CD8-positive, alpha-beta T cell (primary cell): ENCODE measurements at regions of chr14 and their contacts with region 1.

Region 1: GRCh38 chr14:89954070-89955028 is at the start of gene EFCAB11:
- DNase-seq: peak; percentile 89 to 99 (median 93)
- ATAC-seq: peak; percentile 80
- H3K4me3 ChIP-seq: peak within 1 kb of the TSS; percentile 68 to 69
- H3K4me3 Mint-ChIP-seq: peak within 1 kb of the TSS; percentile 92
- H3K27ac ChIP-seq: peak within 1 kb of the TSS; percentile 99
- H3K27ac Mint-ChIP-seq: peak within 1 kb of the TSS; percentile 88
- H3K4me1 ChIP-seq: peaks cover 34% of the 10 kb centered on the region
- H3K4me1 Mint-ChIP-seq: peaks cover 40% of the 10 kb centered on the region
- H3K27me3 ChIP-seq: no peaks in the 10 kb centered on the region
- H3K27me3 Mint-ChIP-seq: no peaks in the 10 kb centered on the region
- CTCF ChIP-seq: no peak
- total RNA-seq, gene EFCAB11: 0.76 to 1.1 TPM

Region 2: GRCh38 chr14:88562831-88563686 is 1391.3 kb before region 1 on chr14 and contains the start of gene ZC3H14:
- CTCF ChIA-PET with region 1: no interaction called
- POLR2A ChIA-PET with region 1: no interaction called
- intact Hi-C with region 1: loop called (anchors 2 to 10 kb)
- DNase-seq: peak; percentile 69 to 94 (median 86)
- ATAC-seq: peak; percentile 95
- H3K4me3 ChIP-seq: peak within 1 kb of the TSS; percentile 75 to 91
- H3K4me3 Mint-ChIP-seq: peak within 1 kb of the TSS; percentile 96
- H3K27ac ChIP-seq: peak within 1 kb of the TSS; percentile 52 to 66
- H3K27ac Mint-ChIP-seq: peak within 1 kb of the TSS; percentile 91
- H3K4me1 ChIP-seq: peaks cover 20% of the 10 kb centered on the region
- H3K4me1 Mint-ChIP-seq: peaks cover 35% of the 10 kb centered on the region
- H3K27me3 ChIP-seq: no peaks in the 10 kb centered on the region
- H3K27me3 Mint-ChIP-seq: peaks cover 7% of the 10 kb centered on the region
- CTCF ChIP-seq: no peak
- total RNA-seq, gene ZC3H14: 36.3 to 39.3 TPM

Region 3: GRCh38 chr14:89598548-89599186 is 355.7 kb before region 1 on chr14:
- CTCF ChIA-PET with region 1: no interaction called
- POLR2A ChIA-PET with region 1: no interaction called
- intact Hi-C with region 1: no loop called
- DNase-seq: peak in 1 of 9 experiments; percentile 34
- ATAC-seq: peak; percentile 57
- H3K4me3 ChIP-seq: no peak overlapping the region
- H3K4me3 Mint-ChIP-seq: no peak overlapping the region
- H3K27ac ChIP-seq: no peak overlapping the region
- H3K27ac Mint-ChIP-seq: no peak overlapping the region
- H3K4me1 ChIP-seq: peaks cover 23% of the 10 kb centered on the region
- H3K4me1 Mint-ChIP-seq: peaks cover 39% of the 10 kb centered on the region
- H3K27me3 ChIP-seq: no peaks in the 10 kb centered on the region
- H3K27me3 Mint-ChIP-seq: no peaks in the 10 kb centered on the region
- CTCF ChIP-seq: no peak

Region 4: DNA sequence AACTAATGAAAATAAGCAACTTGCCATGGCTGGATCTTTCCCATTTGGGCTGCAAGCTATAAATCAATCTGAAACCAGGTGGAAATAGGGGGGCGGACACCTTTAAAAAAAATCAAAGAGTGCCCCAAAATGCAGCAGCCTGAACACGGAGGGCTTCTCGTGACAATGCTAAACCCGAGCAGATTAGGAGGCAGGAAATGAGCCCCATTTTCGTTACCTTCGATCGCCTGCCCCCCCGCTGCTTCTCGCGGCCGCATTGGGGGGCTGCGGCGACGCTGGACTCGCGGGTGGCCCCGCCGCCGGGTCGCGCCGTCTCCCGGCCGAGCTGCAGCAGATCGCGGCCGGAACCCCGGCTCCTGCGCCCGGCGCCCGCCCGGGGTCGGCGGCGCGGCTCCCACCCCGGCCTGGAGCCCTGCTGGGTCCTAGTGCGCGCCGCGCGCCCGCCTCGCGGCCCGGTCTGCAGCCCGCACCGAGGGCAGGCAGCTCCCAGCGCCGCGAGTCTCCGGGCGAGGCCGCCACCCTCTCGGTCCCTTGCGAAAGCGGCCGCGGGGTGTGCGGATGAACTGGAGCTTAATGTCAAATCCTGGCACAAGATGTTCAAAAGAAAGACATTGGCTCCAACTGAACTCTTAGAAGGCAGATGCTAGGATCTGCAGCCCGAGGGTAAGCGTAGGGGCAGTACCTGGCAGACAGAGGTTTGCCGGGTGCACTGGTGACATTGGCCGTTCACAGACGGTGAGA is 335.4 kb before region 1 on chr14:
- CTCF ChIA-PET with region 1: no interaction called
- POLR2A ChIA-PET with region 1: no interaction called
- intact Hi-C with region 1: loop called (anchors 2 kb)
- DNase-seq: peak; percentile 43 to 87 (median 66)
- ATAC-seq: peak; percentile 44
- H3K4me3 ChIP-seq: peak overlapping the region; percentile 64 to 73
- H3K4me3 Mint-ChIP-seq: peak overlapping the region; percentile 97
- H3K27ac ChIP-seq: peak overlapping the region; percentile 89 to 90
- H3K27ac Mint-ChIP-seq: peak overlapping the region; percentile 98
- H3K4me1 ChIP-seq: peaks cover 54% of the 10 kb centered on the region
- H3K4me1 Mint-ChIP-seq: peaks cover 68% of the 10 kb centered on the region
- H3K27me3 ChIP-seq: no peaks in the 10 kb centered on the region
- H3K27me3 Mint-ChIP-seq: no peaks in the 10 kb centered on the region
- CTCF ChIP-seq: no peak

Region 5: GRCh38 chr14:89845385-89845784 is 109.0 kb before region 1 on chr14:
- CTCF ChIA-PET with region 1: no interaction called
- POLR2A ChIA-PET with region 1: no interaction called
- intact Hi-C with region 1: no loop called
- DNase-seq: no peak
- ATAC-seq: no peak
- H3K4me3 ChIP-seq: no peak overlapping the region
- H3K4me3 Mint-ChIP-seq: no peak overlapping the region
- H3K27ac ChIP-seq: no peak overlapping the region
- H3K27ac Mint-ChIP-seq: no peak overlapping the region
- H3K4me1 ChIP-seq: no peaks in the 10 kb centered on the region
- H3K4me1 Mint-ChIP-seq: no peaks in the 10 kb centered on the region
- H3K27me3 ChIP-seq: no peaks in the 10 kb centered on the region
- H3K27me3 Mint-ChIP-seq: no peaks in the 10 kb centered on the region
- CTCF ChIP-seq: no peak

Region 6: DNA sequence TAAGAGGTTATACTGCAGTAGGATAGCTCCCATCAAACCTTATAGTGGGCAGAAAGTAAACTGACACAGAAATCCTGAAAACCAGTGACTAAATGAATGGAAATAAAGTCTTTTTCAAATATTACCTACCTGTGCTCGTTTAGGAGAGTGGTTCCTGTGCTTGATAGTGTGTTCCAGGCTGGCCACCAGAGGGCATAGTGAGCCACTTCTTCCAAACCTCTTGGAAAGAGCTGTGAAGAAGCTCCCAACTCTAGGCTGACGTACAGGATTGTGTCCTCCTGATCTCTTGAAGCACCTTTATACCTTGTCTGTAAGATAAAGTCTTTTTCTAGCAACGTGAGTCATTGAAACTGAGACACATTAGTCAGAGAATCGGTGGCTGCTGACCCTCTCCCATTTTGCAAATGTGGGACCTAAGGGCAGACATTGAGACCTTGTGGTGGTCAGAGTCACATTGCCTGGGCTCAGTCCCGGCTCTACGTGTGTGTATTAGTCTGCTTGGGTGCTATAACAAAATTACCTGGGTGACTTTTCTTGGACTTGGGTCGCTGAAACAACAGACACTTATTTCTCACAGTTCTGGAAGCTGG is 19.0 kb after region 1 on chr14:
- CTCF ChIA-PET with region 1: interaction called, 15 read pairs
- POLR2A ChIA-PET with region 1: interaction called, 3 read pairs
- intact Hi-C with region 1: loop called in 1 of 2 experiments (anchors 1 kb)
- DNase-seq: peak in 8 of 9 experiments; percentile 19 to 62 (median 50)
- ATAC-seq: peak; percentile 61
- H3K4me3 ChIP-seq: no peak overlapping the region
- H3K4me3 Mint-ChIP-seq: no peak overlapping the region
- H3K27ac ChIP-seq: no peak overlapping the region
- H3K27ac Mint-ChIP-seq: no peak overlapping the region
- H3K4me1 ChIP-seq: no peaks in the 10 kb centered on the region
- H3K4me1 Mint-ChIP-seq: peaks cover 6% of the 10 kb centered on the region
- H3K27me3 ChIP-seq: no peaks in the 10 kb centered on the region
- H3K27me3 Mint-ChIP-seq: no peaks in the 10 kb centered on the region
- CTCF ChIP-seq: peak; percentile 67

Region 7: GRCh38 chr14:90383075-90383730 is 428.9 kb after region 1 on chr14:
- CTCF ChIA-PET with region 1: no interaction called
- POLR2A ChIA-PET with region 1: interaction called, 14 read pairs
- intact Hi-C with region 1: loop called in 1 of 2 experiments (anchors 2 kb)
- DNase-seq: peak; percentile 94 to 99 (median 97)
- ATAC-seq: peak; percentile 77
- H3K4me3 ChIP-seq: peak overlapping the region; percentile 88 to 90
- H3K4me3 Mint-ChIP-seq: no peak overlapping the region
- H3K27ac ChIP-seq: peak overlapping the region; percentile 99 to 100
- H3K27ac Mint-ChIP-seq: no peak overlapping the region
- H3K4me1 ChIP-seq: peaks cover 23% of the 10 kb centered on the region
- H3K4me1 Mint-ChIP-seq: peaks cover 28% of the 10 kb centered on the region
- H3K27me3 ChIP-seq: no peaks in the 10 kb centered on the region
- H3K27me3 Mint-ChIP-seq: no peaks in the 10 kb centered on the region
- CTCF ChIP-seq: no peak

Region 8: GRCh38 chr14:90827916-90828610 is 873.7 kb after region 1 on chr14:
- CTCF ChIA-PET with region 1: no interaction called
- POLR2A ChIA-PET with region 1: no interaction called
- intact Hi-C with region 1: loop called in 1 of 2 experiments (anchors 10 kb)
- DNase-seq: peak; percentile 80 to 93 (median 89)
- ATAC-seq: peak; percentile 99
- H3K4me3 ChIP-seq: peak overlapping the region; percentile 60 to 66
- H3K4me3 Mint-ChIP-seq: peak overlapping the region; percentile 79
- H3K27ac ChIP-seq: peak overlapping the region; percentile 34 to 90
- H3K27ac Mint-ChIP-seq: peak overlapping the region; percentile 77
- H3K4me1 ChIP-seq: peaks cover 15% of the 10 kb centered on the region
- H3K4me1 Mint-ChIP-seq: peaks cover 14% of the 10 kb centered on the region
- H3K27me3 ChIP-seq: no peaks in the 10 kb centered on the region
- H3K27me3 Mint-ChIP-seq: no peaks in the 10 kb centered on the region
- CTCF ChIP-seq: no peak